ENCODE measurements at regions of chr1 and their contacts with region 1.

Region 1: GRCh38 chr1:13469343-13469742 is 44.5 kb downstream of the LRRC38 start:
- DNase-seq: no peak
- ATAC-seq: peak; percentile 80
- H3K4me3 ChIP-seq: no peak overlapping the region
- H3K27ac ChIP-seq: no peak overlapping the region
- H3K4me1 ChIP-seq: no peaks in the 10 kb centered on the region
- H3K27me3 ChIP-seq: peaks cover 4% of the 10 kb centered on the region; the same call in 1 of the 2 replicates
- CTCF ChIP-seq: peak; percentile 15; the same call in 1 of the 2 replicates

Region 2: DNA sequence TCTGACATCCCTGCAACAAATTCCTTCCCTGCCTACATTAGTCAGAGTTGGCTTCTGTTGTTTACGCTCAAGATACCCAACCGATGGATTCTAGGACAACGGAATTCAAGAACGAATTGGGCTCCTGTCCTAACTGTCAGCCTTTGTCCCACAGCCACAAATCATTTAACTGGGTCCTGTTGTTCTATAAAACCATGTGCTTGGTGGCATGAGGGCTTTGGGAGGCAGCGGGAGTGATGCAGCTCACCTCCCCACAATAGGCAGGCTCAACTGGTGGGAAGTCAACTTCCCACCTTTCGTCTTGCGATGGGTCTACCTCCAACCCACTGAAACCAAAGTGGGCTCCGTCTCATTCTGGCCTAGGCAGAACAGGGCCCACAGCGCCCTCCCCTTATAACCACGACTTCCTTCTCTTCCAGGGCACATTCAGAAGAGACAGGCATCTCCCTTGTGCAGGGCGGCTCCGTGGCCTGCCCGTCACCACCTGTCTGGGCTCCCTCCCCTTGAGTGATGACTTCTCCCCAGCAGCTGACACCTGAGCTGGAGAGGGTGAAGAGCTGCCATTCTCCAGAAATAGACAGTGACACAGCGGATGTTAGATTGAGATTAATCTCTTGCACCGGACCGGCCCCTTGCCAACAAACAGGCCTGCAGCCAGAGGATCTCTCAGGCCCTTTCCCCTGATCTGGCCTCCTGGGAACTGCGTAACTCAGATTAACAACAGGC is 18.0 kb after region 1 on chr1:
- CTCF ChIA-PET with region 1: no interaction called
- POLR2A ChIA-PET with region 1: interaction called, 17 read pairs
- in situ Hi-C with region 1: no loop called
- intact Hi-C with region 1: no loop called
- DNase-seq: no peak
- ATAC-seq: no peak
- H3K4me3 ChIP-seq: no peak overlapping the region
- H3K27ac ChIP-seq: no peak overlapping the region
- H3K4me1 ChIP-seq: no peaks in the 10 kb centered on the region
- H3K27me3 ChIP-seq: no peaks in the 10 kb centered on the region
- CTCF ChIP-seq: no peak

Measured in Panc1 (cell line).